Mucosa of descending colon (tissue), 3 donors: ENCODE measurements at regions of chr15 and their contacts with region 1.

Region 1: DNA sequence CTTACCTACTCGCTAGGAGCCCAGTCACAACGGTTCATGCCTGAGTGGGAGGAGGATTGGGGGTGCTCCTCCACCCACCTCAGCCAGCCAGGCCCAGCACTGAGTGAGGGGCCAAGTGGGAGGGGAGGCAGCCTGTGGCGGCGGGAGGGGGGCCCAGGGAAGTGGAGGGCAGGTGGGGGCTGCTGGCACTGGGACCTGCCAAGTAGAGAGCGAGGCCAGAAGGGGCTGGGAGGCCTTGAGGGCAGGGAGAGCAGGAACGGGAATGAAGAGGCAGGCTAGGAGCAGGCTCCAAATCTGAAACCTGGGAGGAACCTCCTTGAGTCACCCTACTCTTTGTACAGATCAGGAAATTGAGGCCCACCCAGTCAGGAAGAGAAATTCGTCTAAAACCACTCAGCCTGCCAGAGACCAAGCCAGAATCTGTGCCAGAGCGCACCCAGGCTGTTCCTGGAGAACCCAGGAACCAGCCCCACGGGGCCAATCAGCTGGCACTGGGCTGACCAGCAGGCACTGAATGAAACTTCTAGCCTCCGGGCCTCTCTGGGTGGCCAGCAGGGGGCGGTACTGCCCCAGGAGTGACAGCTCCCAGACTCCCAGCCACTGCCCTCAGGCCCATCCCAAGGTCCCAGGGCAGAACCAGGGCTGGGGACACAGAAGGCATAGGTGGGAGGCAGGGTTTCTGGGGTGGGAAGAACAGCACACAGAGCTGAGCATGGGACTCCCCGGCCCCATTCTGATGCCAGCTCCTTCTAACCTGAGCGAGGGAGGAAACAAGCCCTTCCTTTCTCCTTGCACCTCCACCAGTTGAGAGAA is 14.8 kb upstream of the CYP11A1 start:
- DNase-seq: peak; percentile 88 to 89 (median 88)
- ATAC-seq: peak; percentile 88
- H3K4me3 ChIP-seq: no peak overlapping the region
- H3K4me1 ChIP-seq: peaks cover 5% of the 10 kb centered on the region
- CTCF ChIP-seq: peak; percentile 87

Region 2: DNA sequence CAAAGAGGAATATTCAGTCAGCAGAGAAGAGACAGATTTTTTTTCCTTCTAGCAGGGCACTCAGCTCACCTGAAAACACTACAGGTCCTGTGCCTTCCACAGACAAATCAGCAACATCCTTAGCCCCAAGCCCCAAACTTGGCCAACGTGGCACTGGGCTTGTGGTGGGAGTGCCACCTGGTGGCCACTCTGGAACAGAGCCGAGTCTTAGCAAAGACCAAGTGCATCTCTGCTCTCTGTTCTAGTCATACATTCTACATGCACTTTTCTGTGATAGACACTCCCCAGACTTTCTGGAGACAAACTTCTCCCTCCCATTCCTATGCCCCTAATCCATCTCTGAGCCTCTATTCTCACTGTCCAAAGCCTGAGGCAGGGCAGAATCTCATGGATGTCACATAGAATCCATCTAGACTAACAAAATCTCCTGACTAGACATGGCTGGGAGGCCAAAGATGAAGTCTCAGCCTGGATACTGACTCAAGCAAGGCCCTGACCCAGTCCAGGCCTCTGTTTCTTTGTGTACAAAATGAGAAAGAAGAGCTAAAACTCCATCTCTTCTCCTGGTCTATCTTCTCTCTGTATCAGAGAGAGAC is 56.6 kb after region 1 on chr15:
- intact Hi-C with region 1: loop called (anchors 2 to 5 kb)
- DNase-seq: peak; percentile 65 to 80 (median 77)
- ATAC-seq: peak; percentile 77
- H3K4me3 ChIP-seq: no peak overlapping the region
- H3K4me1 ChIP-seq: no peaks in the 10 kb centered on the region
- CTCF ChIP-seq: peak; percentile 74

Region 3: DNA sequence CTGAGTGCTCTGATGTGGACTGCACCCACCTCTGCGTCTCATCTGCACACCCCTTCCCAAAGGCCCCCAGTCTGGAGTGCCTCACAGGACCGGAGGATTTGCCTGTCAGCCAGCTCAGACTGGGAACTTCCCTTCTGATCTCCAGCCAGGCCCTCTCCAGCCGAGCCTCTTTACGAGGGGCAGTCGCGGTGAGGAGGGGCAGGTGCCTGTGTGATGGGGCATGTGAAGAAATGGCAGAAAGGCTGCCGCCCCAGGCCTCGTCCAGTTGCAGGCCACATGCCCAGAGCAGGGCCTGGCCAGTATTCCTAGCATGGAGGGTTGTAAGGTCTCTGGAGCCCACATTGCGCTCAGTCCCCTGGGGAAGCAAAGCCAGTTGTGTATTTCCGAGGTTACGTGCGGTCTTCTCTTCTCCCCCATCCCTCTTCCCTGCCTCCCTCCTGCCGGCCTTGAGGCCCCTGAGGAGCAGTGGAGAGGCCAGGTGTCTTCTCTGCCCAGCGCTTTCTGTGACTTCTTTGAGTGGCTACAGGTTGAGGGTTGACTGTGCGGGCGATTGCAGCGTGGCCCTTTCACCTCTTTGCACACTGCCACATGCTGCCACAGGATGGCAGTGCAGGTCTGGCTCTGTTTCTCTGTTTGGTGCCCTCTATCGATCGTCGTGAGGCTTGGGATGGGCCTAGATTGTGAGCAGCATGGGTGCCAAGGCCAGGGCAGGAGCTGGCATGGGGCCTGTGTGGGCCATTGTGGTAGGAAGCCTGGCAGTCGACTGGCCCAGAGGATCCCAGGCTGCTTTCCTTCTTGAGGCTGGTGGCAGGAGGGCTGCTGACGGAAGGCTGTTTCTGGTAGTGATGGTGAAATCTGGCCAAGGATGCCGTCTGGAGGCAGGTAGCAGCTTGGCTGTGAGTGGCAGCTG is 238.7 kb after region 1 on chr15:
- intact Hi-C with region 1: loop called in 1 of 2 experiments (anchors 10 kb)
- DNase-seq: peak; percentile 69 to 85 (median 78)
- ATAC-seq: peak; percentile 82
- H3K4me3 ChIP-seq: no peak overlapping the region
- H3K4me1 ChIP-seq: peaks cover 21% of the 10 kb centered on the region
- CTCF ChIP-seq: peak; percentile 59